ENCODE measurements at regions of chr7 and their contacts with region 1.

Region 1: DNA sequence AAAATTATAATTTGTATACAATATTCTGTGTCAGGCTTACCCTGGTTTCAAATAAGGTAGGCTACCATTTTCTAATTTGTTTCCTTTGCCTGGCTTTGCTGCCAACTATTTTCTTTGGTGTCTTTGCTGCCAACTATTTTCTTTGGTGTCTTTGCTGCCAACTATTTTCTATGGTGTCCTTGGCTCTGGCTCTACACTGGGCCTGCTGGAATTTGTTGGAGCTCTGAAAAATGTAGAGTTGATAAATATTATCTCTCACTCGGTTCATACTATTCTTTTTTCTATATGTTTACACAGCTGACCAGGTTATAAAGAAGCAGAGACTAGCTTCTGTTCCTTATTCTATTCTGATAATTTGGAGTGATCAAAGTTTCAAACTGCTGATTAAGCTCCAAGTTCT is 768.0 kb upstream of the PHF14 start:
- DNase-seq: no peak
- ATAC-seq: no peak
- H3K4me3 ChIP-seq: no peak overlapping the region
- H3K27ac ChIP-seq: no peak overlapping the region
- H3K4me1 ChIP-seq: no peaks in the 10 kb centered on the region
- H3K27me3 ChIP-seq: no peaks in the 10 kb centered on the region
- CTCF ChIP-seq: no peak
- EP300 ChIP-seq: no peak
- POLR2A ChIP-seq: no peak
- RAD21 ChIP-seq: no peak

Region 2: GRCh38 chr7:9945879-9946278 is 259.8 kb before region 1 on chr7:
- CTCF ChIA-PET with region 1: no interaction called
- POLR2A ChIA-PET with region 1: no interaction called
- in situ Hi-C with region 1: no loop called
- intact Hi-C with region 1: no loop called
- DNase-seq: no peak
- ATAC-seq: no peak
- H3K4me3 ChIP-seq: no peak overlapping the region
- H3K27ac ChIP-seq: no peak overlapping the region
- H3K4me1 ChIP-seq: no peaks in the 10 kb centered on the region
- H3K27me3 ChIP-seq: no peaks in the 10 kb centered on the region
- CTCF ChIP-seq: no peak
- EP300 ChIP-seq: no peak
- POLR2A ChIP-seq: no peak
- RAD21 ChIP-seq: no peak

Region 3: GRCh38 chr7:10192074-10192473 is 13.6 kb before region 1 on chr7:
- CTCF ChIA-PET with region 1: no interaction called
- POLR2A ChIA-PET with region 1: no interaction called
- in situ Hi-C with region 1: no loop called
- intact Hi-C with region 1: loop called (anchors 1 kb)
- DNase-seq: no peak
- ATAC-seq: no peak
- H3K4me3 ChIP-seq: no peak overlapping the region
- H3K27ac ChIP-seq: no peak overlapping the region
- H3K4me1 ChIP-seq: no peaks in the 10 kb centered on the region
- H3K27me3 ChIP-seq: no peaks in the 10 kb centered on the region
- CTCF ChIP-seq: no peak
- EP300 ChIP-seq: no peak
- POLR2A ChIP-seq: no peak
- RAD21 ChIP-seq: no peak

Region 4: DNA sequence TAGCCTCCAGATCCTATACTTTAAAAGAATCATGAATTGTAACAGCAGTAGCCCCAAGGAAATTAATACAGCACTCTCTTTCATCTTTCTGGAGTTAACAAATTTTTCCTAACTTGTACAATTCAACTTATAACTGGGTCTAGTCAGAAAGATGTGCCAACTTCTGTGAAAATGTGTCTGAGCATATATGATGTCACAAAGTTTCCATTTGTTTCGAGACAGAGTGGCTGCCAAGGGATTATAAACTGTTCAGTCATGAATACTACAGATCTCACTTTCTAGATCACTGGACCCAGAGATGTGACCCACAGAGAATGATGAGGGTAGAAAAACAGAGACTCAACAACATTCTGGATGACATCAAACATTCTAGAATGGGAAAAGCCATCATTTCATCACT is 518.8 kb after region 1 on chr7:
- CTCF ChIA-PET with region 1: no interaction called
- POLR2A ChIA-PET with region 1: no interaction called
- in situ Hi-C with region 1: no loop called
- intact Hi-C with region 1: no loop called
- DNase-seq: no peak
- ATAC-seq: peak; percentile 32; the same call in 2 of the 3 replicates
- H3K4me3 ChIP-seq: no peak overlapping the region
- H3K27ac ChIP-seq: no peak overlapping the region
- H3K4me1 ChIP-seq: no peaks in the 10 kb centered on the region; a peak in 2 of 5 replicates
- H3K27me3 ChIP-seq: no peaks in the 10 kb centered on the region
- CTCF ChIP-seq: no peak
- EP300 ChIP-seq: no peak
- POLR2A ChIP-seq: no peak
- RAD21 ChIP-seq: no peak